ENCODE measurements at regions of chr5 and their contacts with region 1.

Region 1: GRCh38 chr5:32585446-32586275 is at the start of gene SUB1:
- DNase-seq: peak; percentile 88 to 97 (median 93)
- ATAC-seq: peak; percentile 92 to 96 (median 94)
- H3K4me3 ChIP-seq: peak within 1 kb of the TSS; percentile 73 to 88
- H3K4me3 Mint-ChIP-seq: peak within 1 kb of the TSS; percentile 96 to 98 (median 96)
- H3K27ac ChIP-seq: peak within 1 kb of the TSS; percentile 98
- H3K27ac Mint-ChIP-seq: peak within 1 kb of the TSS; percentile 97 to 98
- H3K4me1 ChIP-seq: peaks cover 32 to 54% of the 10 kb centered on the region in 2 experiments
- H3K4me1 Mint-ChIP-seq: peaks cover 69 to 77% (median 76%) of the 10 kb centered on the region in 3 donors
- H3K27me3 ChIP-seq: no peaks in the 10 kb centered on the region
- H3K27me3 Mint-ChIP-seq: no peaks in the 10 kb centered on the region
- total RNA-seq, gene SUB1: 178 to 339 (median 203) TPM

Region 2: GRCh38 chr5:32413466-32414263 is 172.0 kb before region 1 on chr5:
- CTCF ChIA-PET with region 1: interaction called, 8 to 11 read pairs
- POLR2A ChIA-PET with region 1: interaction called in 1 of 2 experiments, 3 read pairs
- DNase-seq: no peak
- ATAC-seq: no peak
- H3K4me3 ChIP-seq: no peak overlapping the region
- H3K4me3 Mint-ChIP-seq: no peak overlapping the region
- H3K27ac ChIP-seq: no peak overlapping the region
- H3K27ac Mint-ChIP-seq: peak overlapping the region in 1 of 2 donors; percentile 6
- H3K4me1 ChIP-seq: no peaks in the 10 kb centered on the region
- H3K4me1 Mint-ChIP-seq: peaks cover 15 to 25% (median 24%) of the 10 kb centered on the region in 3 donors
- H3K27me3 ChIP-seq: no peaks in the 10 kb centered on the region
- H3K27me3 Mint-ChIP-seq: no peaks in the 10 kb centered on the region

Region 3: GRCh38 chr5:32489791-32490582 is 95.7 kb before region 1 on chr5:
- CTCF ChIA-PET with region 1: interaction called, 88 to 187 read pairs
- POLR2A ChIA-PET with region 1: interaction called, 6 to 8 read pairs
- DNase-seq: peak; percentile 20 to 82 (median 58)
- ATAC-seq: peak in 2 of 4 experiments; percentile 53 to 63
- H3K4me3 ChIP-seq: no peak overlapping the region
- H3K4me3 Mint-ChIP-seq: no peak overlapping the region
- H3K27ac ChIP-seq: no peak overlapping the region
- H3K27ac Mint-ChIP-seq: no peak overlapping the region
- H3K4me1 ChIP-seq: peaks cover 0 to 4% of the 10 kb centered on the region in 2 experiments
- H3K4me1 Mint-ChIP-seq: peaks cover 0 to 6% (median 0%) of the 10 kb centered on the region in 3 donors
- H3K27me3 ChIP-seq: no peaks in the 10 kb centered on the region
- H3K27me3 Mint-ChIP-seq: no peaks in the 10 kb centered on the region

Region 4: DNA sequence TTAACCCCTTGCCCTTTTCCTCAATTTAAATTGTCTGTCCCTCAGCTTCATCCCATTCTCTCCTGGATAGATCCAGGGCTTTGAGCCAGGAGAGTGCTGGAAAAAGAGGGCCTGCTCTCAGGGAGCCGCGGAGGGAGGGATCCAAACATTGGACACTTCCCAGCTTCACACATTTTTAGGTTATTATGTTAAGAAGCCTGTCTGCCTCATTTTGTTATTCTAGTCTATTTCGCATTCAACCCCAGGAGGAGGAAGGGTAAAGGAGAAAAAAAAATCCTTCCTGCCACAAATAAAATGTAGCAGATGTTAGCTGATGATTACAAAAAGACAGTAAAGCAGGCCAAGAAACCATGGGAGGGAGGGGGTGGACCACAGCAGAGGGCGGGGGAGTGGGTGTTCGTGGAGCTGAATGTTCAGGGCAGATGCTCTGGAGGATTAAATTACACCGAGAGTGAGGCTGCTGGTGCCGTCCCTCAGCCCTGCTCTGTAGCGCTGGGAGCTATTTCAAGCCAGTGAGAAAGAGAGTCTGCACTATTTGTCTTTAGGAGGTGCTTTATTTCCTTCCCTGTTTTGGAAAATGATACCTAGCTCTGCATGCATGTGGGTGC is 80.6 kb before region 1 on chr5:
- CTCF ChIA-PET with region 1: interaction called, 7 to 10 read pairs
- POLR2A ChIA-PET with region 1: no interaction called
- DNase-seq: peak in 9 of 35 experiments; percentile 2 to 20 (median 10)
- ATAC-seq: peak; percentile 40 to 58 (median 50)
- H3K4me3 ChIP-seq: peak overlapping the region in 1 of 2 donors; percentile 25
- H3K4me3 Mint-ChIP-seq: peak overlapping the region in 2 of 3 donors; percentile 3 to 68
- H3K27ac ChIP-seq: no peak overlapping the region
- H3K27ac Mint-ChIP-seq: peak overlapping the region; percentile 48 to 62
- H3K4me1 ChIP-seq: peaks cover 3 to 13% of the 10 kb centered on the region in 2 experiments
- H3K4me1 Mint-ChIP-seq: peaks cover 16 to 23% (median 18%) of the 10 kb centered on the region in 3 donors
- H3K27me3 ChIP-seq: peaks cover 0 to 3% of the 10 kb centered on the region in 2 experiments
- H3K27me3 Mint-ChIP-seq: peaks cover 0 to 9% of the 10 kb centered on the region in 2 donors

Region 5: GRCh38 chr5:32600057-32600622 is 14.5 kb after region 1 on chr5:
- CTCF ChIA-PET with region 1: interaction called, 9 to 18 read pairs
- POLR2A ChIA-PET with region 1: interaction called, 3 to 9 read pairs
- DNase-seq: no peak
- ATAC-seq: no peak
- H3K4me3 ChIP-seq: no peak overlapping the region
- H3K4me3 Mint-ChIP-seq: no peak overlapping the region
- H3K27ac ChIP-seq: no peak overlapping the region
- H3K27ac Mint-ChIP-seq: no peak overlapping the region
- H3K4me1 ChIP-seq: peaks cover 9 to 24% of the 10 kb centered on the region in 2 experiments
- H3K4me1 Mint-ChIP-seq: peaks cover 60 to 69% (median 60%) of the 10 kb centered on the region in 3 donors
- H3K27me3 ChIP-seq: no peaks in the 10 kb centered on the region
- H3K27me3 Mint-ChIP-seq: no peaks in the 10 kb centered on the region

Region 6: GRCh38 chr5:32628048-32628803 is 42.6 kb after region 1 on chr5:
- CTCF ChIA-PET with region 1: no interaction called
- POLR2A ChIA-PET with region 1: no interaction called
- DNase-seq: no peak
- ATAC-seq: no peak
- H3K4me3 ChIP-seq: no peak overlapping the region
- H3K4me3 Mint-ChIP-seq: no peak overlapping the region
- H3K27ac ChIP-seq: no peak overlapping the region
- H3K27ac Mint-ChIP-seq: no peak overlapping the region
- H3K4me1 ChIP-seq: no peaks in the 10 kb centered on the region
- H3K4me1 Mint-ChIP-seq: no peaks in the 10 kb centered on the region
- H3K27me3 ChIP-seq: peaks cover 0 to 2% of the 10 kb centered on the region in 2 experiments
- H3K27me3 Mint-ChIP-seq: no peaks in the 10 kb centered on the region

Region 7: DNA sequence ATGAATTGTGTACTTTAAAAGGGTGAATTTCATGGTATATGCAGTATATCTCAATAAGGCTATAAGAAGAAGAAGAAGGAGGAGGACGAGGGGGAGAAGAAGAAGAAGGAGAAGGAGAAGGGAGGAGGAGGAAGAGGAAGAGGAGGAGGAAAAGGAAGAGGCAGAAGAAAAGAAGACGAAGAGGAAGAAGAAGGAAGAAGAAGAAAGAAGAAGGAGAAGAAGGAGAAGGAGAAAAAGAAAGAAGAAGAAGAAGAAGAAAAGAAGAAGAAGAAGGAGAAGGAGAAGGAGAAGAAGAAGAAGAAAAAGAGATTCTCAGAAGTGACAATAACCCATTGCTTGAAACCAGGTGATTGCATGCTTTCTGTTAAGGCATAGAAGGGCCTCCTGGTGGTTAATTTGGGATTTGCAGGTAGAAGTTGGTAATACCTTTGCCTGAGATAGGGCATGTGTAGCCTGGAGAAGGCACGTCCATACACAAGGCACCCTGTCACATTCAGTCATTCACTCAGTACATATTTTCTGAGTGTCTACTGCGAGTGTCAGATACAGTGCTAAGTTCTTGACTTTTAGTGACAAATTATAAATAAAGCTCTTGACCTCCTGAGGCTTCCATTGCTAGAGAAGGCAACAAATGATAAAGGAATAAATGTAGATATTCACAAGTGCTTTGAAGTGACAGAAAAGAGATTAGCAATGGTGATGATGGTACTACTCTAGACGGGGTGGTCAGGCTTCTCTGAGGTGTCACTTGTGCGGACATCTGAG is 356.7 kb after region 1 on chr5:
- CTCF ChIA-PET with region 1: no interaction called
- POLR2A ChIA-PET with region 1: no interaction called
- DNase-seq: peak in 1 of 35 experiments; percentile 14
- ATAC-seq: no peak
- H3K4me3 ChIP-seq: no peak overlapping the region
- H3K4me3 Mint-ChIP-seq: no peak overlapping the region
- H3K27ac ChIP-seq: no peak overlapping the region
- H3K27ac Mint-ChIP-seq: no peak overlapping the region
- H3K4me1 ChIP-seq: no peaks in the 10 kb centered on the region
- H3K4me1 Mint-ChIP-seq: no peaks in the 10 kb centered on the region
- H3K27me3 ChIP-seq: no peaks in the 10 kb centered on the region
- H3K27me3 Mint-ChIP-seq: no peaks in the 10 kb centered on the region

Measured in T-cell (primary cell).